ENCODE measurements at regions of chr7 and their contacts with region 1.

Region 1: GRCh38 chr7:48109848-48110663 is 21.0 kb downstream of the UPP1 start:
- DNase-seq: peak; percentile 46
- ATAC-seq: peak; percentile 92
- H3K4me3 ChIP-seq: no peak overlapping the region
- H3K27ac ChIP-seq: no peak overlapping the region
- H3K4me1 ChIP-seq: no peaks in the 10 kb centered on the region
- H3K27me3 ChIP-seq: no peaks in the 10 kb centered on the region
- CTCF ChIP-seq: peak; percentile 89 to 99 (median 96)
- POLR2A ChIP-seq: no peak
- RAD21 ChIP-seq: peak; percentile 96

Region 2: GRCh38 chr7:47991741-47992311 is 118.2 kb before region 1 on chr7:
- CTCF ChIA-PET with region 1: interaction called, 12 read pairs
- POLR2A ChIA-PET with region 1: no interaction called
- RAD21 ChIA-PET with region 1: no interaction called
- intact Hi-C with region 1: loop called (anchors 1 kb)
- DNase-seq: no peak
- ATAC-seq: peak; percentile 96
- H3K4me3 ChIP-seq: no peak overlapping the region
- H3K27ac ChIP-seq: no peak overlapping the region
- H3K4me1 ChIP-seq: peaks cover 2 to 5% of the 10 kb centered on the region in 2 experiments; a peak in 2 of 4 replicates
- H3K27me3 ChIP-seq: no peaks in the 10 kb centered on the region
- CTCF ChIP-seq: peak; percentile 52 to 62 (median 61); a peak in 5 of 6 replicates
- POLR2A ChIP-seq: peak; percentile 37
- RAD21 ChIP-seq: peak; percentile 83

Region 3: DNA sequence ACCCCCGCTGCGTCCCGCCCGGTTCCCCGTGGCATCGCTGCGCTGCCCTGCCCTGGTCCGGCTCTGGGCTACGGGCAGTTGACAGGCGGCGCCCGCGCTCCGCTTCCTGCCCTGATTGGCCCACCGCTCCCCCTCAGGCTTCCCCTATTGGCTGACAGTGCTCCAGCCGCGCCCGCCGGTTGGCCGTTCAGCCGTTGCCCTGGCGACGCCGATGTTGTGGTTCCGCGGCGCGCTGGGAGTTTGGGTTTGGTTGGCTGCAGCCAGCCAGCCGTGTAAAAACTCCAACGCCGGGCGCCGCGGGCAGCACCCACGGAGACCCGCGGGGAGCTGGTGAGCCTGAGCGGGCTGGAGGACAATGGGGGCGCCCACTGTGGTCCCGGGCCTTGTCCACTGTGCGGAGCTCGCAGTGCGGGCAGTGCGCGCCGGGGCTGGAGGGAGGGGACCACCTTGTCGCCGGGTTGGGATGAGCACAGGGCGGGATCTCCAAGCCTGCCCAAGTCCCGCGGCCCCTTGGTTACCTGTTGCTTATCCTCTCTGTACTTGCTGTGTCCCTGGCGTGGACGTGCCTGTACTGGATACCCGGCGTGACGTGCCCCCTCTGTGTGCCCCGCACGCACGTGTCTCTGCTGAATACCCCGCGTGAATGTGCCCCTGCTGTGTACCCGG is 74.6 kb before region 1 on chr7 and contains the start of gene C7orf57:
- CTCF ChIA-PET with region 1: no interaction called
- POLR2A ChIA-PET with region 1: no interaction called
- RAD21 ChIA-PET with region 1: no interaction called
- intact Hi-C with region 1: no loop called
- DNase-seq: peak; percentile 26
- ATAC-seq: peak; percentile 100
- H3K4me3 ChIP-seq: 0 out of 4 replicates have a peak within 1 kb of the TSS, but pooled peaks have one; percentile 2 to 7
- H3K27ac ChIP-seq: no peak within 1 kb of the TSS
- H3K4me1 ChIP-seq: 0 out of 4 replicates have a peak, but pooled peaks cover 0 to 8% of the 10 kb centered on the region in 2 experiments
- H3K27me3 ChIP-seq: no peaks in the 10 kb centered on the region
- CTCF ChIP-seq: no peak
- POLR2A ChIP-seq: no peak
- RAD21 ChIP-seq: no peak
- total RNA-seq, gene C7orf57: 0.15 TPM